Left cardiac atrium (tissue), 4 donors: ENCODE measurements at regions of chr6 and their contacts with region 1.

Region 1: GRCh38 chr6:14361297-14361696 is 243.7 kb downstream of the CD83 start:
- DNase-seq: no peak
- ATAC-seq: peak; percentile 81 to 88

Region 2: DNA sequence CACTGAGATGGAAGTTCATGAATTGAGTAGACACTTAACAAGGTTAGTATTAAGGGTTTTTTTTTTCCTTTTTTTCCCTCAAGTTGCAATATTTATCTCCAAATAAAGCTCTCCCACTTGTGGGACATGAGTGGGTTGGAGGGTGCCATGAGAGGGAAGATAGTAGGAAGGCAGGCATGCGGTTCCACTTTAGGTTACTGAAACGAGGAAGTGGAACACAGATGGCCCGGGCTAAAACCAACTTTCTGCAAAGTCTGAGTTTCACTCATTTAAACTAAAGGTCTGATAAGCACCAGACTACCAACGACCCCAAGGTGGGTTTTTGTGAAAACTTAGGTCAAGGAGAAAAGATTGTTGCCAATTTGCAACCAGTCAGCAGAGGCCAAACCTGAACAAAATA is 1075.1 kb before region 1 on chr6:
- intact Hi-C with region 1: no loop called
- DNase-seq: no peak
- ATAC-seq: no peak

Region 3: DNA sequence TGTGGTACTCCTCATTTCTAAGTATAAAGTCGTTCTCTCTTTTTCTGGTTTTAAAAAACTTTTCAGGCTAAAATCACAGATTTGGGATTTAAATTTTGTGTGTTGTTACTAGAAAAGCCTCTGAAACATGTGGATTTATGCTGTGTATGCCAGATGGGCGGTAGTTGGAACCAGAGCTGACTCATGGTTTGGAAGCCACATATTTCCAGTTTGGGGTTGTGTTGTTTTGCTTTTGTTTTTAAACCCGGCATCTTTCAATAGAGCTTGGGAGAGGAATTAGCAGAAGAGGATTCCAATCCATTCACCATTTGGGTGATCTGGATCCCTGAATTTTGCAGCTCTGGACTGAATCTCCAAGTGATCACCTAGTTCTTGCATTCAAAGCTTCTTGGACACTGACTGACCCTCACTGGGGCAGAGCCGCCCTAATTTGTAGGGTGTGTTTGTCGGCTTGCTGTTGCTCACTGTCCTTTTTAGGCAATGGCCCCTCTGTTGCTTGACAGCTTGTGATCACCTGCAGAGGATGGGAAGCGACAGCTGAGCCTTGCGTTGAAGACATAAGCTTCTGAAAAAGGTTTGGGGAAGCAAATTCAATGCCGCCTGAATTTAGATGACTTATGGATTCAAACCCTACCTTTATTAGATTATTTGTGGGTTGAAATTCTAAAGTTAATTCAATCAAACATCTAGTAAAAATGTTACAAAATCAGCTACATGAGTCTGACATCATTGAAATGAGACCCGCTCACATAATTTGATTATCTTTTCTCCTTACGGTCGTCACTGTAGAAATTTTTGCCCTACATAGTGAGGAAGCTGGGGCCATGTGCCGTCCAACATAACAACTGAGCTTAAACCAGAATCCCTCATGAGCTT is 323.7 kb before region 1 on chr6:
- intact Hi-C with region 1: no loop called
- DNase-seq: no peak
- ATAC-seq: peak in 1 of 2 donors; percentile 63

Region 4: DNA sequence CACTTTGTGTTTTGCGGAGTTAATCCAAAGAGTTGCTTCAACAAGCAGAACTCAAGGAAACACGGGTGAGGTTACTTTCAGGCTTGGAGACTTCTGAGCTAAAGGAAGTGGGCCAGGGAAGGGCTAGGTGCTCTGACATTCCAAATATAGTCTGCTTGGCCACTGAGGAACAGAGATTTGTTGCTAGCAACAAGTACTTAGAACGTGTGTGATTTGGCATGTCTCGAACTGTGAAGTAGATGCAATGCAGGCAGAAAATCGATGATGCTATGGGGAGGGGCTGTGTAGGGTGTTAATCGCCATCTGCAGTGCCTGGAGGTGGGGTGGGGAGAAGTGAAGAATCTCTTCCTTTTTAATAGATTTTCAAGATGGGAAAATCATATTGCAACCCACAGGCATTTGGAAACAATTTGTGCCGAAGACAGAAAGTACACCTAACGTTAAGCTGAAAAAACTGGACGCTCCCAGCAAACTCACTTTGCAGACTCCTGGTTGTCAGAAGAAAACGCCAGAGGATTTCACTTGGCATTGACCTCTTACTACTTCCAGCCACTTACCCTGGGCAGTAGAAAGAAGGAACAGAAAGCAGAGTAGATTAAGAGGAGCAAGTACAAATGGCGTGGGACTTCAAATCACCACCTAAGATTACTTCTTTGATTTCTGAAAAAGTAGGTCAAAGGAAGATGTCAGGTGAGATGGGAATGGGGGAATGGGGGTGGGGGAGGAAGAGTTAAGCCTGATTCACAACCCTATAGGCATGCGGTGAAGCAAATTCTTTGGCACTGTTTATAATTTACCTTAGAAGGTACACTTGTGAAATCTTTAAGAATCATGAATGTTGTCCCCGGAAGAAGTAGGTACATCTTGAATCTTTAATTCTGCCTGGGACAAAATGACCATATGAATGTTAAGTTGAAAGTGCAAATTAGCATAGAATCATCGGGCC is 70.4 kb after region 1 on chr6:
- intact Hi-C with region 1: loop called in 1 of 2 experiments (anchors 2 kb)
- DNase-seq: no peak
- ATAC-seq: peak; percentile 79 to 90

Region 5: DNA sequence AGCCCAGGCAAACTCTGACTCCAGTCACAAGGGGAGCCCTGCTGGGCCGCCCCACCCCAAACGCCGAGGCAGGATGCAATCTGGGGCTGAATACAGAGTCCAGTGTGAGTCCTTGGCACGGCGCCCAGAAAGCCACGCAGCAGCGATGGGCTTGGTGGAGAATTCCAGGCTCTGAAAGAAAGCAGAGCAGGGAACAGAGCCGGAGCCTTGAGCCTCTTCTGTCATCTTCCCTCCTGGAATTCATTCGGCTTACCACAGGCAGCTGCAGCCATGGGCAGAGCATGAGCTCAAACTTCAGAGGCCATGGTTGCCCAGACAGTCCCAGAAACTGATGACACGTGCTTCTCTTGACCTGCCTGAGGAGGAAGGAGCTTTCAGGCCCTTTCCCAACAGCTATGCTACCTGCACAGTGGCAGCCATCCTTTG is 443.5 kb after region 1 on chr6:
- intact Hi-C with region 1: no loop called
- DNase-seq: peak; percentile 89
- ATAC-seq: peak; percentile 75 to 85